ENCODE measurements at regions of chr1 and their contacts with region 1.

Region 1: DNA sequence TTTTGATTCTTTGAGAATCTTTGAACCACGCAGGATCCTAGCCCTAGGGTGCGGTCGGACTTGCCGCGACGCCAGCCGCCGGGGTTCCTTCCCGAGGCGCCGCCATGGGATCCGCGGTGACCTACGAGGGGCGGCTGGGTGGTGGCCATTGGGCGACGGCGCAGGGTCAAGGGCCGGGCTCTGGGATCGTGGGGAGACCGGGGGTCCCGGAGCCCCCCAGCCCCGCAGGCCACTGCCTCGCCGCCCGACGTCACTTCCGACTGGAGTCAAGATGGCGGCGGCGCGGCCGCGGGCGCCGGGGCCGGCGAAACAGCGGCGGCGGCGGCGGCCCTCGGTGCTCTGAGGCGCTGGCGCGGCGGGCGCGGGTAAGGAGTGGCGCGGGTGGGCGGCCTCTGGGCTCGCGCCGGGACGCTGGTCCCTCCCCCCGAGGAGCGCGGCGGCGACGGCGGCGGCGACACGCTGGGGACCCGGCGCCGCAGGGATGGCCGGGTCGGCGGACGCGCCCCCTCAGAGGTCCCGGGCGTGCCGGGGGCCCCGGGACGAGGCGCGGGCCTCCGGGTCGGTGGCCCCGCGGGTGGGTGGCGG is at the start of gene PRDM2:
- DNase-seq: peak; percentile 76
- ATAC-seq: peak; percentile 56
- H3K4me3 Mint-ChIP-seq: peak within 1 kb of the TSS; percentile 94
- H3K27ac Mint-ChIP-seq: peak within 1 kb of the TSS; percentile 98
- H3K4me1 Mint-ChIP-seq: peaks cover 41% of the 10 kb centered on the region
- H3K27me3 Mint-ChIP-seq: no peaks in the 10 kb centered on the region
- total RNA-seq, gene PRDM2: 36.2 to 46.7 TPM

Region 2: GRCh38 chr1:13725714-13726175 is 25.7 kb after region 1 on chr1:
- CTCF ChIA-PET with region 1: interaction called, 19 read pairs
- POLR2A ChIA-PET with region 1: interaction called, 3 read pairs
- intact Hi-C with region 1: loop called in 1 of 2 experiments (anchors 1 kb)
- DNase-seq: peak; percentile 75
- ATAC-seq: peak; percentile 40
- H3K4me3 Mint-ChIP-seq: no peak overlapping the region
- H3K27ac Mint-ChIP-seq: no peak overlapping the region
- H3K4me1 Mint-ChIP-seq: peaks cover 47% of the 10 kb centered on the region
- H3K27me3 Mint-ChIP-seq: no peaks in the 10 kb centered on the region

Region 3: GRCh38 chr1:13730751-13731482 is 30.9 kb after region 1 on chr1:
- CTCF ChIA-PET with region 1: interaction called, 19 read pairs
- POLR2A ChIA-PET with region 1: no interaction called
- intact Hi-C with region 1: loop called (anchors 1 kb)
- DNase-seq: peak; percentile 90
- ATAC-seq: peak; percentile 97
- H3K4me3 Mint-ChIP-seq: peak overlapping the region; percentile 82
- H3K27ac Mint-ChIP-seq: peak overlapping the region; percentile 97
- H3K4me1 Mint-ChIP-seq: peaks cover 63% of the 10 kb centered on the region
- H3K27me3 Mint-ChIP-seq: no peaks in the 10 kb centered on the region

Region 4: DNA sequence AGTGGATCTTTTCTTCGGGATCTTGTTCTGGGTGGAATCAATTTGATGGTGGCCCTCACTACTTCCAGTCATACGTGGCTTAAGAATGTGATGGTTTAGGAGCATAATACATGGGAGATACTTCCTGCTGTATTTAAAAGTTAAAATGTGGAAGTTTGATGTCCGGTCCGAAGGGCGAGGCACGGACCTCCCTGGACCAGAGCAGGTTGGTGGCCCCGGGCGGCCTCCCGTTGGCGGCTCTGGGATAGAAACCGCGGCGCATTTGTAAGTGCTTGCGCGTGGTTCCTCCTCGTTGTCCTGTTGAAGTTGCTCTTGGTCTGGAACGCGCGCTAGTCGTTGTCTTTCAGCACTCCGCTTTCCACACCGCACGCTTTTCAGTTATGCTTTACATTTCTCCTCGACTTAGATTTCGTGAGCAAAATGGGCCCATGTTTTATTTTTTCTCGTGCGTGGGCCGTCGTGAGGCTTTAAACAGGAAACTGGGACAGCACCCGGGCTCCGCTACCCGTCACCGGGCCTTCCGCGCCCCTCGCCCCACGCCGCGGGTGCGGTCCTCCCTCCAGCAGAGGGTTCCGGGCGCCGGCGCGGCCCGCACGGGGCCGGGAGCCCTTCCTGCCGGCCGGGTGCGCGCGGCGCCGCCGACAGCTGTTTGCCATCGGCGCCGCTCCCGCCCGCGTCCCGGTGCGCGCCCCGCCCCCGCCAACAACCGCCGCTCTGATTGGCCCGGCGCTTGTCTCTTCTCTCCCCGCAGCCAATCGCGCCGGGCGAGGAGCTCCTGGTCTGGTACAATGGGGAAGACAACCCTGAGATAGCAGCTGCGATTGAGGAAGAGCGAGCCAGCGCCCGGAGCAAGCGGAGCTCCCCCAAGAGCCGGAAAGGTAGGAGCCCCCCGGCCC is 48.8 kb after region 1 on chr1:
- CTCF ChIA-PET with region 1: interaction called, 5 read pairs
- POLR2A ChIA-PET with region 1: no interaction called
- intact Hi-C with region 1: loop called (anchors 1 to 5 kb)
- DNase-seq: peak; percentile 97
- ATAC-seq: peak; percentile 93
- H3K4me3 Mint-ChIP-seq: peak overlapping the region; percentile 97
- H3K27ac Mint-ChIP-seq: peak overlapping the region; percentile 90
- H3K4me1 Mint-ChIP-seq: peaks cover 45% of the 10 kb centered on the region
- H3K27me3 Mint-ChIP-seq: no peaks in the 10 kb centered on the region

Region 5: GRCh38 chr1:13813398-13814012 is 113.5 kb after region 1 on chr1:
- CTCF ChIA-PET with region 1: no interaction called
- POLR2A ChIA-PET with region 1: no interaction called
- intact Hi-C with region 1: loop called in 1 of 2 experiments (anchors 10 kb)
- DNase-seq: peak; percentile 83
- ATAC-seq: peak; percentile 70
- H3K4me3 Mint-ChIP-seq: no peak overlapping the region
- H3K27ac Mint-ChIP-seq: no peak overlapping the region
- H3K4me1 Mint-ChIP-seq: peaks cover 10% of the 10 kb centered on the region
- H3K27me3 Mint-ChIP-seq: no peaks in the 10 kb centered on the region

Region 6: DNA sequence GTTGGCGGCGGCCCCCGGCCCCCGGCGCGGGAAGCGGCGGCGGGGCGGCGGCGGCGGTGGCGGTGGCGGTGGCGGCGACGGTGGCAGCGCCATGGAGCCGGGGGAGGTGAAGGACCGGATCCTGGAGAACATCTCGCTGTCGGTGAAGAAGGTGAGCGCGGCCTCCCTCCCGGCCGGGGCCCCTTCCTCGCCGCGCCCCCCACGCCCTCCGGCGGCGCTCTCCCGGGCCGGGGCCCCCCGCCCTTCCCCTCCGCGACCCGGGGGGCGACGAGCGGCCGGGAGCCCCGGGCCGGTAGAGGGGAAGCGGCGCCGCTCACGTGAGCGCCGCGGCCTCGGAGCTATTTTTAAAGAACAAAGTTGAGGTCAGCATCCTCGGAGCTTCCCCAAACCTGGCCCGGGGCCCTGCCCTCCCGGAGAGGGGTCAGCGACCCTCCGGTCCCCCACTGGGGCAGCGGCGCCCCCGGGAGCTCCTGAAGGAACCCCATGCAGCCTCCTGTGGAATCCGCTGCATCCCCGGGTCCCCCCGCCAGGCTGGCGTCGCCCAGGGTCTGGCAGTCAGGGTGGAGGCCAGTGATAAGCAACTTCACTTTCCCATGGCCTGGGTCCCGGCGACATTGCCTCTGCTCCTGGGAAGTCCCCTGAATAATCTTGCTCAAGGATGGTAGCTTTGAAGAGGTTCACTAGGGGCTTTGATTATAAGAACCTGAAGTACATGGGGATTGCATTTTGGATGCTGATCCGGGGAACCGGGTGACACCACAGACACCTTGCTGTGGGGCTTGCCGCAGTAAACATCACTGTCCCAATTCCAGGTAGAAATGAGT is 1984.7 kb after region 1 on chr1:
- CTCF ChIA-PET with region 1: no interaction called
- POLR2A ChIA-PET with region 1: no interaction called
- intact Hi-C with region 1: loop called in 1 of 2 experiments (anchors 10 kb)
- DNase-seq: peak; percentile 60
- ATAC-seq: peak; percentile 37
- H3K4me3 Mint-ChIP-seq: peak overlapping the region; percentile 86
- H3K27ac Mint-ChIP-seq: peak overlapping the region; percentile 92
- H3K4me1 Mint-ChIP-seq: peaks cover 53% of the 10 kb centered on the region
- H3K27me3 Mint-ChIP-seq: no peaks in the 10 kb centered on the region